ENCODE measurements at regions of chr17 and their contacts with region 1.

Region 1: GRCh38 chr17:42577532-42578281 is at the start of gene PSMC3IP:
- DNase-seq: peak; percentile 96
- ATAC-seq: peak; percentile 81
- H3K4me3 Mint-ChIP-seq: peak within 1 kb of the TSS; percentile 98
- H3K27ac Mint-ChIP-seq: peak within 1 kb of the TSS; percentile 100
- H3K4me1 Mint-ChIP-seq: peaks cover 20% of the 10 kb centered on the region
- H3K27me3 Mint-ChIP-seq: no peaks in the 10 kb centered on the region
- CTCF ChIP-seq: no peak
- total RNA-seq, gene PSMC3IP: 20.1 to 23.3 TPM (median 21.6 TPM) in 3 replicates

Region 2: GRCh38 chr17:42484304-42484703 is 93.4 kb before region 1 on chr17:
- CTCF ChIA-PET with region 1: no interaction called
- POLR2A ChIA-PET with region 1: no interaction called
- DNase-seq: no peak
- ATAC-seq: no peak
- H3K4me3 Mint-ChIP-seq: no peak overlapping the region
- H3K27ac Mint-ChIP-seq: no peak overlapping the region
- H3K4me1 Mint-ChIP-seq: no peaks in the 10 kb centered on the region
- H3K27me3 Mint-ChIP-seq: no peaks in the 10 kb centered on the region
- CTCF ChIP-seq: no peak

Region 3: GRCh38 chr17:42548070-42548837 is 29.5 kb before region 1 on chr17:
- CTCF ChIA-PET with region 1: interaction called, 38 read pairs
- POLR2A ChIA-PET with region 1: interaction called, 4 read pairs
- DNase-seq: peak; percentile 97
- ATAC-seq: peak; percentile 87
- H3K4me3 Mint-ChIP-seq: peak overlapping the region; percentile 59
- H3K27ac Mint-ChIP-seq: no peak overlapping the region
- H3K4me1 Mint-ChIP-seq: peaks cover 15% of the 10 kb centered on the region
- H3K27me3 Mint-ChIP-seq: peaks cover 2% of the 10 kb centered on the region; the same call in 1 of the 2 replicates
- CTCF ChIP-seq: no peak; the same call in 1 of the 2 replicates

Region 4: DNA sequence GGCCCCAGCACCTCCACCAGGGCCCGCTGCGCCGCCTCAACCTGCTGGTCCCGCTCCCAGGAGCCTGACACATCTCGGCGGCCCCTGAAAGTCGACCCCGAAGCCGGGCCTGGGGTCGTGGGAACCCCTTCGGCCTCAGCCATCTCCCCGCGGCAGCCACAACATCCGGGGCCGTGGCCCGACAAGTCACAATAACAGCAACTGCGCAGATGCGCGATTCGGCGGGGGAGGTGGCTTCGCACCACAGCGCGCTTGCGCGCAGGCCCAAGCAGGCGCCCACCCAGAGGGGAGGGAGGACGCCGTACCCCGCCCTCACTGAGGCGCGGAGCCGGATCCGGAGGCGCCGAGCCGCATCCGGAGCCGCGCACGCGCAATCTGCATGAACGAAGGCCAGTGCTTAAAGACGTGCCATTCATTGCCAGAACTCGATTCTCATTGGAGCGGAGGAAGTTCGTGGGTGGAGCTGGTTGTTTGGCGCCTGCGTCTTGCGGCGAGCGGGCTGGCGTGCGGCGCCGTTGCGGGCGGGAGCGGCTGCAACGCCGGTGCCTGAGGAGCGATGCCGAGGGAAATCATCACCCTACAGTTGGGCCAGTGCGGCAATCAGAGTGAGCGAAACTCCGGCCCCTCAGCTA is 31.6 kb after region 1 on chr17 and contains the starts of genes RETREG3 and TUBG1:
- CTCF ChIA-PET with region 1: interaction called, 55 read pairs
- POLR2A ChIA-PET with region 1: interaction called, 9 read pairs
- DNase-seq: peak; percentile 99
- ATAC-seq: peak; percentile 94
- H3K4me3 Mint-ChIP-seq: peak within 1 kb of the TSS; percentile 100
- H3K27ac Mint-ChIP-seq: peak within 1 kb of the TSS; percentile 97
- H3K4me1 Mint-ChIP-seq: peaks cover 17% of the 10 kb centered on the region
- H3K27me3 Mint-ChIP-seq: no peaks in the 10 kb centered on the region
- CTCF ChIP-seq: no peak
- total RNA-seq, gene RETREG3: 39.8 to 43.2 TPM (median 40.4 TPM) in 3 replicates
- total RNA-seq, gene TUBG1: 130 to 141 TPM (median 140 TPM) in 3 replicates

Region 5: DNA sequence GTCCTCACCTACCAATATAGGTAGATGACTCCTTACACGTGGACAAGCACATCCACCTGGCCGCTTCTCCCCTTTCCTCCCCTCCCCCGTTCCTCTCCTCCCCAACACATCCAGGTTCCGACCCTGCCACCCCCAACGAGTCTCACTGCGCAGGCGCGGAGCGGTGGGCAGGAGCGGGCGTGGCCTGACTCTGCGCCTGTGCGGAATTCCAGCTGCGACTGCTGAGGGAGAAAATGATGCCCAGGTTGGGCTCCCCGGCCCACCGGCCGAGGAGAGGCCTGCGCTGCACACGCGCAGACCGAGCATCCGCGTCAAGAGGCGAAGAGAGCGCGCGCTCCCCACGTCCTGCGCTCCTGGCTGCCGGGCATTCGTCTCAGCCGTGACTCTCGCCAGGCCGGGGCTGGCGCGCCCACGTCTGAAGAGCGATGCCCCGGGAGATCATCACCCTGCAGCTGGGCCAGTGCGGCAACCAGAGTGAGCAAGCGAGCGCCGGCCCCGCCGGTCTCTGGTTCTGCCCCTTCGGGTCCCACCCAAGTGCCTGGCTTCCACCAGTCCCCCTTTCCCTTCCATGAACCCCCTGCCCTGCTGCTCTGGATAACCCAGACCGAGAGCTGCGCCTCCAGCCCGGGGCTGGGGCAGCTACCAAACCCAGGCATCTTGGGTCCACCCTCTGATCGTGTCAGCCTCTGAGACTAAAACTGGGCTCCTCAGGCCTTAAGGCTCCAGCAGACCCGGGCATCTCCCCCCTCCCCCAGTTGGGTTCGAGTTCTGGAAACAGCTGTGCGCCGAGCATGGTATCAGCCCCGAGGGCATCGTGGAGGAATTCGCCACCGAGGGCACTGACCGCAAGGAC is 81.6 kb after region 1 on chr17 and contains the start of gene TUBG2:
- CTCF ChIA-PET with region 1: interaction called, 22 read pairs
- POLR2A ChIA-PET with region 1: interaction called, 4 read pairs
- DNase-seq: peak; percentile 96
- ATAC-seq: peak; percentile 88
- H3K4me3 Mint-ChIP-seq: peak within 1 kb of the TSS; percentile 85
- H3K27ac Mint-ChIP-seq: peak within 1 kb of the TSS; percentile 57
- H3K4me1 Mint-ChIP-seq: peaks cover 11% of the 10 kb centered on the region
- H3K27me3 Mint-ChIP-seq: peaks cover 3% of the 10 kb centered on the region
- CTCF ChIP-seq: no peak
- total RNA-seq, gene TUBG2: 22.1 to 26.7 TPM (median 22.2 TPM) in 3 replicates

Region 6: GRCh38 chr17:42702446-42702845 is 124.7 kb after region 1 on chr17:
- CTCF ChIA-PET with region 1: interaction called, 17 read pairs
- POLR2A ChIA-PET with region 1: no interaction called
- DNase-seq: no peak
- ATAC-seq: no peak
- H3K4me3 Mint-ChIP-seq: no peak overlapping the region
- H3K27ac Mint-ChIP-seq: no peak overlapping the region
- H3K4me1 Mint-ChIP-seq: peaks cover 2% of the 10 kb centered on the region; the same call in 1 of the 2 replicates
- H3K27me3 Mint-ChIP-seq: no peaks in the 10 kb centered on the region
- CTCF ChIP-seq: no peak

Region 7: GRCh38 chr17:42773290-42774035 is 195.8 kb after region 1 on chr17 and contains the start of gene VPS25:
- CTCF ChIA-PET with region 1: interaction called, 13 read pairs
- POLR2A ChIA-PET with region 1: no interaction called
- DNase-seq: peak; percentile 77
- ATAC-seq: peak; percentile 94
- H3K4me3 Mint-ChIP-seq: peak within 1 kb of the TSS; percentile 99
- H3K27ac Mint-ChIP-seq: peak within 1 kb of the TSS; percentile 97
- H3K4me1 Mint-ChIP-seq: peaks cover 7% of the 10 kb centered on the region
- H3K27me3 Mint-ChIP-seq: no peaks in the 10 kb centered on the region; the same call in 1 of the 2 replicates
- CTCF ChIP-seq: no peak
- total RNA-seq, gene VPS25: 98.6 to 103 TPM (median 101 TPM) in 3 replicates

Measured in WTC11 (cell line).